ENCODE measurements at regions of chrX and their contacts with region 1.

Region 1: DNA sequence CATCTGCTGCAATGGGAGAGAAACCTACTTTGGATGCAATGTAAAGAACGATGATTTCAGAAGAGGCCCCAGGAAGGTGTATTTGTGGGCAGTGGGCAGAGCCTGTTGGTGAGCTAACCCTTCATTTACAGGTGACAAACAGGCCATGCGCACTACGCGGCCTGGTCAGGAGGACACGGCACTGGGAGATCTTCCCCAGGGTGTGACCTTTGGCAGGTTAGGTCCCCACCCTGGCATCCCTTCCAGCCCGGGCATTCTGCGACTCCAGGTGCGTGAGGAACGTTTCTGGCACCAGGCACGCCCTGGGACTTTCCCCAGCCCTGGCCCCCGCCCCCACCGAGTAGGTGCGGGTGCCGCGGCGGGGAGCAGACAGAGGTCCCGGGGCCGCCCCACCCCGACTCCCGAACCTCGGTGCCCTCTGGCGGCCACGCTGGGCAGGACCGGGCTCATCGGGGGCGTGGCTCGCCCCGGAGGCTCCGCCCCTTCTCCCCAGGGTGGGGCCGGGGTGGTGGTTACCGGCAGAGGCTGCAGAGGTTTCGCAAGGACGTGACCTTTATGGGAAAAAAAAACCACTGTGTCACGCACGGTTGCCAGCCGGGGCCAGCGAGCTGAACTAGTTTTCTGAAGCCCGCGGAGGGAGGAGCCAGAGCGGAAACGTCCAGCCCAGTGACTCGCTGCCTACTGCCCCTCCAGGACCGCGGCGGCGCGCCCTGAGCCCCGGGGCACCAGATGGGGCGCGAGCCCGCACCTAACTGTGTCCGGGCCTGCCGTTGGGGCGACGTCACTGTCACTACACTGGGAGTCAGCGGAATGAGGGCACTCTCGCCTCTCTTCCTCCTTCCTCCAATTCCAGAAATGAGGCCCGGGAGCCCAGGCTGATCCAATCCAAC is 5.0 kb upstream of the NYX start:
- DNase-seq: peak; percentile 79 to 96 (median 87)
- ATAC-seq: peak; percentile 99
- H3K4me3 ChIP-seq: peak overlapping the region; percentile 60
- H3K4me3 Mint-ChIP-seq: peak overlapping the region; percentile 45 to 76 (median 68)
- H3K27ac ChIP-seq: no peak overlapping the region
- H3K27ac Mint-ChIP-seq: peak overlapping the region in 6 of 9 donors; percentile 28 to 89 (median 53)
- H3K4me1 ChIP-seq: no peaks in the 10 kb centered on the region
- H3K4me1 Mint-ChIP-seq: peaks cover 0 to 20% (median 5%) of the 10 kb centered on the region in 7 donors
- H3K27me3 ChIP-seq: no peaks in the 10 kb centered on the region
- H3K27me3 Mint-ChIP-seq: no peaks in the 10 kb centered on the region

Region 2: DNA sequence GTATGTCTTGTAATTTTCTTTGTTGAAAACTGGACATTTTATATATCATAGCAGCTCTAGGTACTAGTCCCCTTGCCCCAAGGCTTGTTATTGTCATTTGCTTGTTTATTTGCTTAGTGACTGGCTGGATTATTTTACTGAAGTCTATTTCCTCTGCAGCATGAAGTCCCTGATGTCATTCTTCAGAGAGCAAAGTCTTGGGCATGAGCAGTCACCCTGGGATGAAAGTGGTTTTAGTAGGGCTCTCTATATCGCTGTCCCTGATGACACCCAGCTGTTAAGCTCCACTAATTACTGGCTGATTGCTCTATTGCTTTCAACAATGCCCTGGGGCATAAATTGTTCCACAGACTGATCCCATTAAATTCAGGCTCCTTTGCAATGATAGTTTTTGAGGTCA is 470.4 kb before region 1 on chrX:
- CTCF ChIA-PET with region 1: no interaction called
- POLR2A ChIA-PET with region 1: no interaction called
- intact Hi-C with region 1: no loop called
- DNase-seq: no peak
- ATAC-seq: no peak
- H3K4me3 ChIP-seq: no peak overlapping the region
- H3K4me3 Mint-ChIP-seq: no peak overlapping the region
- H3K27ac ChIP-seq: no peak overlapping the region
- H3K27ac Mint-ChIP-seq: no peak overlapping the region
- H3K4me1 ChIP-seq: no peaks in the 10 kb centered on the region
- H3K4me1 Mint-ChIP-seq: peaks cover 0 to 4% (median 0%) of the 10 kb centered on the region in 7 donors
- H3K27me3 ChIP-seq: no peaks in the 10 kb centered on the region
- H3K27me3 Mint-ChIP-seq: no peaks in the 10 kb centered on the region

Region 3: DNA sequence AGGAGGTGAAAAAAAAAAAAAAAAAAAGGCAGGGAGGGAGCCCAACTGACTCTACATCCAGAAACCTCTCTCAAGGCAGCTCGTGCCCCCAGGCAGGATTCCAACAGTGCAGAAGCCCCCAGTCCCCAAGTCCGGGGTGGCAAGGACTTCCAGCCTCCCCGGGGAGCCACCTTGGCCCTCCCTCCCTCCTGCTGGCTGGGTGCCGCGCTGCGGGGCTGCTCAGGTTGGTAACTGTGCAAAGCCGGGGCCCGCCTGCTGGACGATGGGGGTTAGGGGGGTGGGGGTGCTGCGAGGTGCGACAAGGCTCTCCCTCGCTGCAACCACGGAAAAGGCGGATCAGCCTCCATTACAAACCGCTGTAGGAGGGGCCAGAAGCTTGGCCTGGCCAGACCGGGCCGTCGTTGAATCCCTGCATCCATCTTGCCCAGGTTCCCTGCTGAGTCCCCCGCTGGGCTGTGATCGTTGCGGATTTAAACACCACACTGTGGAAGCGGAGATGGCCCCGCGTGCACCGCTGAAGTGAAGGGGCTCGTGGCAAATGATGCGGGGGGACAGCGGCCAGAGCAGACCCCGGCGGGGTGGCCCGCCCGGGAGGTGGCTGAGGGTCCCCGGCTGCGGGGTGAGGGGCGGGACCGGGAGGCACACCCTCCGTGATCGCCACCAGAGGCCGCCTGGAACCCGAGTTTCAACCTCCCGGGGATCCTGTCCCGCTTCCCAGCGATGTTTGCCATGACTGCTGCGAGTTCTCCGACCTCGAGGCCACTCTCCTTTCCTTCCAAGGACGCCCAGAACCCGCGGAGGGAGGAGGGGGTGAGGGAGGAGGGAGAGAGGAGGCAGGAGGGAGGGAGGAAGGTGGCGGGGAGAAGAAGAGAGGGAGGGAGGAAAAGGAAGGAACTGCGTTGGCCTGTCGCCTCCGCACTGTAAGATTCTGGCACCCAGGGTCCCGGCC is 166.2 kb before region 1 on chrX:
- CTCF ChIA-PET with region 1: interaction called, 4 read pairs
- POLR2A ChIA-PET with region 1: interaction called, 3 read pairs
- intact Hi-C with region 1: loop called (anchors 1 kb)
- DNase-seq: peak in 8 of 9 donors; percentile 12 to 50 (median 43)
- ATAC-seq: peak; percentile 76
- H3K4me3 ChIP-seq: peak overlapping the region; percentile 64
- H3K4me3 Mint-ChIP-seq: peak overlapping the region; percentile 75 to 88 (median 82)
- H3K27ac ChIP-seq: peak overlapping the region; percentile 35
- H3K27ac Mint-ChIP-seq: peak overlapping the region in 8 of 9 donors; percentile 36 to 85 (median 70)
- H3K4me1 ChIP-seq: no peaks in the 10 kb centered on the region
- H3K4me1 Mint-ChIP-seq: peaks cover 0 to 16% (median 10%) of the 10 kb centered on the region in 7 donors
- H3K27me3 ChIP-seq: no peaks in the 10 kb centered on the region
- H3K27me3 Mint-ChIP-seq: peaks cover 0 to 2% (median 0%) of the 10 kb centered on the region in 5 donors

Region 4: GRCh38 chrX:41384041-41384705 is 58.0 kb before region 1 on chrX:
- CTCF ChIA-PET with region 1: no interaction called
- POLR2A ChIA-PET with region 1: interaction called, 3 read pairs
- intact Hi-C with region 1: loop called (anchors 1 kb)
- DNase-seq: peak; percentile 4 to 58 (median 26)
- ATAC-seq: peak; percentile 79
- H3K4me3 ChIP-seq: no peak overlapping the region
- H3K4me3 Mint-ChIP-seq: peak overlapping the region in 5 of 10 donors; percentile 18 to 87 (median 79)
- H3K27ac ChIP-seq: no peak overlapping the region
- H3K27ac Mint-ChIP-seq: peak overlapping the region in 5 of 9 donors; percentile 36 to 98 (median 87)
- H3K4me1 ChIP-seq: peaks cover 0 to 5% of the 10 kb centered on the region in 2 donors
- H3K4me1 Mint-ChIP-seq: peaks cover 0 to 21% (median 15%) of the 10 kb centered on the region in 7 donors
- H3K27me3 ChIP-seq: no peaks in the 10 kb centered on the region
- H3K27me3 Mint-ChIP-seq: no peaks in the 10 kb centered on the region

Region 5: GRCh38 chrX:41406211-41406610 is 36.0 kb before region 1 on chrX:
- CTCF ChIA-PET with region 1: no interaction called
- POLR2A ChIA-PET with region 1: no interaction called
- intact Hi-C with region 1: no loop called
- DNase-seq: no peak
- ATAC-seq: no peak
- H3K4me3 ChIP-seq: no peak overlapping the region
- H3K4me3 Mint-ChIP-seq: no peak overlapping the region
- H3K27ac ChIP-seq: no peak overlapping the region
- H3K27ac Mint-ChIP-seq: no peak overlapping the region
- H3K4me1 ChIP-seq: no peaks in the 10 kb centered on the region
- H3K4me1 Mint-ChIP-seq: no peaks in the 10 kb centered on the region
- H3K27me3 ChIP-seq: no peaks in the 10 kb centered on the region
- H3K27me3 Mint-ChIP-seq: no peaks in the 10 kb centered on the region

Region 6: DNA sequence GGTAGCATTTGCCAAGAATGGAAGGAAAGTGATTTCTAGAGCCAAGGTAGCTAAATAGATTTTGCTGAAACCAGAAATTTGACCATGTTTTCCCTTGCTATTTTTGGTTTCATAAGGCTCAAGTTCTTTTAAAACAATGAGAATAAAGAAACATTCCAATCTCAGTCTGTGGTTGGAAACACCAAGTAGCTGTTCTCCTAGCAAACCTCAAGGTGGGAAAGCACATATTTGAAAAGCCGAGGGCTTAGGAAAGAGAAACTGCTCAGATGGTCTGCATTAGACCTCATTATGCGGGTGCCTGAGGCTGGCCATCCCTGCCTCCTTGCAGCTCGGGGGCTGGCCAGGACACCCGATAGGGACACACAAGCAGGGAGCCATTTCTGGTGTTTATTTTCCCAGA is 10.8 kb after region 1 on chrX:
- CTCF ChIA-PET with region 1: no interaction called
- POLR2A ChIA-PET with region 1: no interaction called
- intact Hi-C with region 1: no loop called
- DNase-seq: no peak
- ATAC-seq: no peak
- H3K4me3 ChIP-seq: no peak overlapping the region
- H3K4me3 Mint-ChIP-seq: no peak overlapping the region
- H3K27ac ChIP-seq: no peak overlapping the region
- H3K27ac Mint-ChIP-seq: no peak overlapping the region
- H3K4me1 ChIP-seq: no peaks in the 10 kb centered on the region
- H3K4me1 Mint-ChIP-seq: peaks cover 0 to 21% (median 12%) of the 10 kb centered on the region in 7 donors
- H3K27me3 ChIP-seq: no peaks in the 10 kb centered on the region
- H3K27me3 Mint-ChIP-seq: no peaks in the 10 kb centered on the region

Region 7: DNA sequence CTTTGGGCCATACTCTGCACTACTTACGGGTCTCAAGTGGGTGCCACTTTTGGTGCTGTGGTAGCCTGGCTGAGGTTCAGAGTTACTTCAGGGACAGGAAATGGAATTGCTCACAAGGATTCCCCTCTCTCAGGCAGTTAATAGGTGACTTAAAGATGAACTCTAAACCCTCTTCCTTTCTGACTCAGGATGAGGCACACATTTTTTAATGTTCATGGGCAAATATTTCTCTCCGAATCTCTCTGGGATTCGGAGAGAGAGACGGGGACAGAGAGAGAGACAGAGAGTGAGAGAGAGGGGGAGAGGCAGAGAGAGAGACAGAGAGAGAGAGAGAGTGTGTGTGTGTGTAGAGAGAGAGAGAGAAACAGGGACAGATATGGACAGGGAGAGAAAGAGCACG is 84.7 kb after region 1 on chrX:
- CTCF ChIA-PET with region 1: no interaction called
- POLR2A ChIA-PET with region 1: no interaction called
- intact Hi-C with region 1: loop called in 1 of 2 experiments (anchors 10 kb)
- DNase-seq: no peak
- ATAC-seq: no peak
- H3K4me3 ChIP-seq: no peak overlapping the region
- H3K4me3 Mint-ChIP-seq: peak overlapping the region in 1 of 10 donors; percentile 43
- H3K27ac ChIP-seq: no peak overlapping the region
- H3K27ac Mint-ChIP-seq: peak overlapping the region in 5 of 9 donors; percentile 3 to 62 (median 18)
- H3K4me1 ChIP-seq: no peaks in the 10 kb centered on the region
- H3K4me1 Mint-ChIP-seq: peaks cover 0 to 22% (median 0%) of the 10 kb centered on the region in 7 donors
- H3K27me3 ChIP-seq: no peaks in the 10 kb centered on the region
- H3K27me3 Mint-ChIP-seq: no peaks in the 10 kb centered on the region

Region 8: DNA sequence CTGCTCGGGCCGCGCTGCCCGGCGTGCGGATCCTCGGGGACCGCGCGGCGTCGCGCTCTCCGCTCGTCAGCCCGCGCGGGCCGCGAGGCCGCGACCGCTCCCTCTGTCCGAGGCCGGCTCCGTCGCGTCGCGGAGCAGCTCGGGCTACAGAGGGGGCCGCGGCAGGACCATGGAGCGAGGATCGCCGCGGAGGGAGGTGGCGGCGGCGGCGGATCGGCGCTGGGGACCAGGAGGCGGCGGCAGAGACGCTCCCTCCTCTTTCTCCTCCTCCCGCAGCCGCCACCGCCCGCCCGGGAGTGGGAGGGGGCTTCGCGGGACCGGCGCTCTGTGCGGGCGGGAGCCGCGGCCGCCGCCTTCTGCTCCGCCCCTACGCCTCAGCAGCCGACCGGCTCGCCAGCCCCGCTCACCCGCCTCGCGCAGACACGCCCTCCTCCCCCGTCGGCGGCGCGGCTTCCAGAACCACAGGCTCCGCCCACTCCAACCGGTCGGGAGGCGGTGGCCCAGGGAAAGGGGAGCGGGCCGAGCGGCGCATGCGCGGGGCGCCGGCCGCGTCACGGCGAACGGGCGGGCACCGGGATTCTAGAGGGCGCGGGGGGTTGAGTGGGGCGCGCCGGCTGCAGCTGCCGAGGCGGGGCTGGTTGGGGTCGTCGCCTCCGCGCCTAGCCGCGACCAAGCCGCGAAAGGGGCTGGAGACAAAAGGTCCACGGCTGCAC is 481.2 kb after region 1 on chrX and contains the start of gene CASK:
- CTCF ChIA-PET with region 1: no interaction called
- POLR2A ChIA-PET with region 1: no interaction called
- intact Hi-C with region 1: loop called in 1 of 2 experiments (anchors 5 kb)
- DNase-seq: peak; percentile 74 to 91 (median 84)
- ATAC-seq: peak; percentile 92
- H3K4me3 ChIP-seq: peak within 1 kb of the TSS; percentile 78
- H3K4me3 Mint-ChIP-seq: peak within 1 kb of the TSS; percentile 91 to 99 (median 92)
- H3K27ac ChIP-seq: peak within 1 kb of the TSS; percentile 70
- H3K27ac Mint-ChIP-seq: peak within 1 kb of the TSS; percentile 76 to 95 (median 91)
- H3K4me1 ChIP-seq: peaks cover 5% of the 10 kb centered on the region in 2 donors
- H3K4me1 Mint-ChIP-seq: peaks cover 6 to 39% (median 29%) of the 10 kb centered on the region in 7 donors
- H3K27me3 ChIP-seq: no peaks in the 10 kb centered on the region
- H3K27me3 Mint-ChIP-seq: peaks cover 0 to 2% (median 0%) of the 10 kb centered on the region in 5 donors
- total RNA-seq, gene CASK: 31.5 to 72.4 (median 65.0) TPM

Measured in naive thymus-derived CD4-positive, alpha-beta T cell (primary cell).